T-cell (primary cell): ENCODE measurements at regions of chr4 and their contacts with region 1.

Region 1: GRCh38 chr4:77146186-77147078 is 10.6 kb upstream of the CCNG2 start:
- DNase-seq: no peak
- ATAC-seq: peak; percentile 40 to 71 (median 60)
- H3K4me3 ChIP-seq: no peak overlapping the region
- H3K4me3 Mint-ChIP-seq: peak overlapping the region in 1 of 3 donors; percentile 11
- H3K27ac ChIP-seq: peak overlapping the region; percentile 23
- H3K27ac Mint-ChIP-seq: peak overlapping the region; percentile 59 to 73
- H3K4me1 ChIP-seq: peaks cover 4 to 20% of the 10 kb centered on the region in 2 experiments
- H3K4me1 Mint-ChIP-seq: peaks cover 15 to 19% (median 17%) of the 10 kb centered on the region in 3 donors
- H3K27me3 ChIP-seq: peaks cover 0 to 6% of the 10 kb centered on the region in 2 experiments
- H3K27me3 Mint-ChIP-seq: no peaks in the 10 kb centered on the region

Region 2: GRCh38 chr4:75696071-75696470 is 1450.4 kb before region 1 on chr4:
- CTCF ChIA-PET with region 1: no interaction called
- POLR2A ChIA-PET with region 1: interaction called in 1 of 2 experiments, 14 read pairs
- DNase-seq: peak in 28 of 35 experiments; percentile 12 to 77 (median 46)
- ATAC-seq: peak; percentile 45 to 95 (median 52)
- H3K4me3 ChIP-seq: peak overlapping the region in 1 of 2 donors; percentile 26
- H3K4me3 Mint-ChIP-seq: peak overlapping the region in 1 of 3 donors; percentile 4
- H3K27ac ChIP-seq: no peak overlapping the region
- H3K27ac Mint-ChIP-seq: peak overlapping the region; percentile 10 to 52
- H3K4me1 ChIP-seq: peaks cover 17 to 26% of the 10 kb centered on the region in 2 experiments
- H3K4me1 Mint-ChIP-seq: peaks cover 35 to 43% (median 42%) of the 10 kb centered on the region in 3 donors
- H3K27me3 ChIP-seq: no peaks in the 10 kb centered on the region
- H3K27me3 Mint-ChIP-seq: no peaks in the 10 kb centered on the region

Region 3: DNA sequence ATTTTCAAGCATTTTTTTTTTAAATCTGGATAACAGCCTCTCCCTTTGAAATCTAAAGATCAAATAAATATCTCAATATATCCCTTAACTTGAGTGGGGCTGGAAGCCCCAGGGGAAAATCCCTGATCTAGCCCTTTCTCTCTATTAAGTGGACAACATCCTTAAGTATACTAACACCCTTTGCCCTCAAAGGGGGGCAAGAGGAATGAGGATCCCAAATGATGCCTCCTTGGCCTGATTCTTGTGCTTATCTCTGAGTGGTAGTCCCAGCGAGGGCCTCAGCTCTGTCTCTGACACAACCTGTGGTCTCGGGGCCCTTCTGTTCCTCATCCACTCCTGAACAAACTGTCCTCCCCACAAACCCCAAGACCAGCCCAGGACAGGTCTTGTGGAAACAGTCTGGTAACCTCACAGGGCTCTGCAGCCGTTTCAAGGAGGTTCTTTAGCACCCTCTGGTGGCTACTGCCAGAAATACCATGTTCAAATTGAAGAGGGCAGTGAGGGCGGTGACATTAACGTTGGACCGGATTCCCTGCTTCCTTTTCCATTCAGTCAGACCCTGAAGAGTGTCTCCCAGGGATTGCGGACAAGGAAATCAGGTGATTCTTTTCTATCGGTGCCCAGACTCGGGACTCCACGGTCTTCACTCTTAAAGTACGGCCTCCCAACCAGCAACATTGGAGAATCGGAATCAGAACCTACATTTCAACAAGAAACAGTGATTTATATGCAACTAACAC is 472.1 kb after region 1 on chr4:
- CTCF ChIA-PET with region 1: no interaction called
- POLR2A ChIA-PET with region 1: no interaction called
- DNase-seq: peak in 34 of 35 experiments; percentile 2 to 73 (median 34)
- ATAC-seq: peak; percentile 59 to 75 (median 64)
- H3K4me3 ChIP-seq: no peak overlapping the region
- H3K4me3 Mint-ChIP-seq: no peak overlapping the region
- H3K27ac ChIP-seq: no peak overlapping the region
- H3K27ac Mint-ChIP-seq: no peak overlapping the region
- H3K4me1 ChIP-seq: peaks cover 0 to 6% of the 10 kb centered on the region in 2 experiments
- H3K4me1 Mint-ChIP-seq: peaks cover 4 to 11% (median 6%) of the 10 kb centered on the region in 3 donors
- H3K27me3 ChIP-seq: peaks cover 0 to 4% of the 10 kb centered on the region in 2 experiments
- H3K27me3 Mint-ChIP-seq: peaks cover 9 to 15% of the 10 kb centered on the region in 2 donors